ENCODE measurements at regions of chr19 and their contacts with region 1.

Region 1: DNA sequence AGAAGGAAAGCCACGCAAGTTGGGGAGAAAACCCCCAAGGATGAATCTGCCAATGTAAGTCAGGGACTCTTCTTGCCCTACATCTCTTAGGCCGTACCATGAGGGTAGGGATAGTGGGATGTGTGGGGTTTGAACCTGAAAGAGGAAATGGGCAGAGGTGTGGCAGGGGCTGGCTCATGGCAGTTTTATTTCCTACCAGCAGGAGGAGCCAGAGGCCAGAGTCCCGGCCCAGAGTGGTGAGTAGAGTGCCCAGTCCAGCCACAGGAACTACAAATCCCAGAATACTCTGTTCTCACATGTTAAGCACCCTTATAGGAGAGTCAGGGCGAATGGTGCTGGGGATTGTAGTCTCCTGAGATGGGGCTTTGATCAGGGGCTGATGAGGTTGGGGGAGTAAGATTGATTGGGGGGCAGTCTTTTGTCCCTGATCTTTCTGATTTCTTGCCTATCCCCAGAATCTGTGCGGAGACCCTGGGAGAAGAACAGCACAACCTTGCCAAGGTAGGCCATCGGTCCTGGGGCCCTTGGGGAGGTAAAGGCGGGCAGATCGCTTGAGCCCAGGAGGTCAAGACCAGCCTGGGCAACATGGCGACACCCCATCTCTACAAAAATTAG is 16.5 kb downstream of the VASP start:
- DNase-seq: peak; percentile 77 to 83
- ATAC-seq: peak; percentile 98
- H3K4me3 ChIP-seq: no peak overlapping the region
- H3K27ac ChIP-seq: peak overlapping the region; percentile 2 to 63 (median 32)
- H3K4me1 ChIP-seq: peaks cover 0 to 11% of the 10 kb centered on the region in 2 donors
- H3K27me3 ChIP-seq: peaks cover 0 to 2% (median 1%) of the 10 kb centered on the region in 3 donors
- CTCF ChIP-seq: peak; percentile 95 to 98 (median 97)
- POLR2A ChIP-seq: no peak

Region 2: DNA sequence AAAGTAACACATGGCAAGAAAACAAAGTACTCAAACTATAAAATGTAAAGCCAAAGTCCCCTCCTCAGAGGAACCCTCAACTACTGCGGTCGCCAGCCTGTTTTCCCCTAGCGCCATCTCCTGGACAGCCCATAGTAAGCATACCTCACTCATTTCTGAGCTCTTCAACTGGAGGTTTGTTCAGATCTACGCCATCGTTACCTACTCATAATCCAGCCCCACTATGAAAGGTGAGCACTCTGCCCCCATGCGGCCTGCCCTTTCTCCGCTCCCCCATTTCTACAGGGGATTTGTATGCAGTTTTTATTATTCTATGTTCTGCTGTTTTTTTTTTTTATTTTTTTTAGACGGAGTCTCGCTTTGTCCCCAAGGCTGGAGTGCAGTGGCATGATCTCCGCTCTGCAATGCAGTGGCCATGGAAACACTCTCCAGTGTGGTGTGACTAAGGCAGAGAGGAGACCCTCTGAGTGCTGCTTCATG is 34.7 kb after region 1 on chr19:
- in situ Hi-C with region 1: no loop called
- intact Hi-C with region 1: loop called (anchors 1 kb)
- DNase-seq: no peak
- ATAC-seq: peak; percentile 54 to 56
- H3K4me3 ChIP-seq: no peak overlapping the region
- H3K27ac ChIP-seq: no peak overlapping the region
- H3K4me1 ChIP-seq: peaks cover 0 to 12% of the 10 kb centered on the region in 2 donors
- H3K27me3 ChIP-seq: no peaks in the 10 kb centered on the region
- CTCF ChIP-seq: peak; percentile 17 to 53 (median 37)
- POLR2A ChIP-seq: no peak

Region 3: DNA sequence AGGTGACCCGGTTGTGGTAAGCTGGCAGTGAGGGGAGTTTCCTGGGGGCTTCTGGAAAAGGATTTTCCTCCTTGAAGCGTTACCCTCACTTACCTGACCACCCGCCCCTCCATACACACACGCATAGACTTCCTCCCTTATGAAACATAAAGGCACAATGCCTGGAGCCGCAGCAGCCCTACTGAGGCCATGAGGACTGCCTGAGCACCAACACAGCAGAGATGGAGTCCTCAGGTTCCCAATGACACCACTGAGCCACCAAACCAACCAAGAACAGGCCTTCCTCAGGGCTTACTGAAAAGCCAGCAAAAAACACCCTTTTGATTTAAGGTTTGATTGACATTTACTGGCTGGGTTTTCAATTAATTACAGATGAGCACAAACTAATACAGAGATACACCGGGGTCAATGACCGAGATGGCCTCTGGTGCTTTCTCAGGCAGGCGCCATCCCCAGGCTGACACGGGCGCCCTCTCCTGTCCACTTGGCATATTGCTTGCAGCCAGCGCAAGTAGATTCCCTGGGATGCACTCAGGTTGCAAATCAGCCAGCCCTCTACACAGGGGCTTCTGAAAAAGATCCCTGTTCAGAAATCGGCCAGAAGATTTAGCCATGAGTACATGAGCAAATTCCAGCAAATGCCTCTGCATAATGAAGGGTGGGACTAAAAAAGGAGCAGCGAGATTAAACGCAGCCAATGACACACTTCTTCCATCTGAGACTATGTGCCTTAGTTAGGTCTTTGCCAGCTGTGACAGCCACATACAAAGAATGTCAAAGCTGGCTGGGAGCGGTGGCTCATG is 46.1 kb after region 1 on chr19:
- in situ Hi-C with region 1: no loop called
- intact Hi-C with region 1: loop called (anchors 1 kb)
- DNase-seq: peak; percentile 48 to 77
- ATAC-seq: peak; percentile 60 to 61
- H3K4me3 ChIP-seq: no peak overlapping the region
- H3K27ac ChIP-seq: peak overlapping the region; percentile 84 to 93 (median 86)
- H3K4me1 ChIP-seq: peaks cover 37 to 43% of the 10 kb centered on the region in 2 donors
- H3K27me3 ChIP-seq: no peaks in the 10 kb centered on the region
- CTCF ChIP-seq: peak; percentile 73 to 87 (median 79)
- POLR2A ChIP-seq: no peak

Region 4: GRCh38 chr19:45643024-45643926 is 119.5 kb after region 1 on chr19:
- in situ Hi-C with region 1: loop called in 2 of 4 experiments (anchors 5 to 10 kb)
- intact Hi-C with region 1: loop called (anchors 1 kb)
- DNase-seq: peak; percentile 27 to 62
- ATAC-seq: peak; percentile 43 to 58
- H3K4me3 ChIP-seq: peak overlapping the region in 1 of 4 donors; percentile 8
- H3K27ac ChIP-seq: no peak overlapping the region
- H3K4me1 ChIP-seq: peaks cover 11 to 27% of the 10 kb centered on the region in 2 donors
- H3K27me3 ChIP-seq: peaks cover 0 to 30% (median 30%) of the 10 kb centered on the region in 3 donors
- CTCF ChIP-seq: peak; percentile 96 to 99 (median 97)
- POLR2A ChIP-seq: no peak

Region 5: DNA sequence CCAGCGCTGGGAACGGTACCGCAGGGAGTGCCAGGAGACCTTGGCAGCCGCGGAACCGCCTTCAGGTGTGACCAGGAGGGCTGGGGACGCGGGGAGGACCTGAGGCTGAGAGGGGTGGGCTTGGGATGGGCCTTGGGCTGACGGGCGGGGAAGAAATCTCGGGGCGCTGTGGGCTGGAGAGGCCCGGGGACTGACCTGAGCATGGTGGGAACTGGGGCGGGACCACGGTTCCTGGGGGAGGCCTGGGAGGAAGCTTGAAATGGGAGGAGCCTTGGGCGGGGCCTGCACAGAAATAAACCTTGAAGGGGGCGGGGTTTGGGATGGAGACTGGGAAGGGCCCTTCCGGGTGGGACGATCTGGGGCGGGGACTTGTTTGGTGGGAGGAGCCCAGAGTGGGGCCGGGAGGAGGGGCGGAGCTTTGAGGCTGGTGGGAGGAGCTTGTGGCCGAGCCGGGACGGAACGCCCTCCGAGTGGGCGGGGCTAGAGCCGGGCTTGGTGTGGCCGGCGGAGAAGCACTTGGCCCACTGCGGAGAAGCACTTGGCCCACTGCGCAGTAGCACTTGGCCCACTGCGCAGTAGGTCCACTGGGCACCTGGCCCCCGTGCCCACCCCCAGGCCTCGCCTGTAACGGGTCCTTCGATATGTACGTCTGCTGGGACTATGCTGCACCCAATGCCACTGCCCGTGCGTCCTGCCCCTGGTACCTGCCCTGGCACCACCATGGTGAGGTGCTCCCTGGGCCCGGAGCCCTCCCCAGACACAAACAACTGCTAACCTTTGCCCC is 147.1 kb after region 1 on chr19:
- in situ Hi-C with region 1: loop called in 1 of 4 experiments (anchors 25 kb)
- intact Hi-C with region 1: no loop called
- DNase-seq: peak in 1 of 2 donors; percentile 37
- ATAC-seq: peak in 1 of 2 donors; percentile 53
- H3K4me3 ChIP-seq: peak overlapping the region in 2 of 4 donors; percentile 10
- H3K27ac ChIP-seq: no peak overlapping the region
- H3K4me1 ChIP-seq: peaks cover 6 to 15% of the 10 kb centered on the region in 2 donors
- H3K27me3 ChIP-seq: peaks cover 64 to 78% (median 68%) of the 10 kb centered on the region in 3 donors
- CTCF ChIP-seq: no peak
- POLR2A ChIP-seq: no peak

Region 6: GRCh38 chr19:45681391-45682015 is 157.8 kb after region 1 on chr19:
- in situ Hi-C with region 1: no loop called
- intact Hi-C with region 1: loop called (anchors 2 kb)
- DNase-seq: peak; percentile 57 to 87
- ATAC-seq: peak; percentile 97 to 99
- H3K4me3 ChIP-seq: peak overlapping the region; percentile 50 to 62 (median 54)
- H3K27ac ChIP-seq: peak overlapping the region; percentile 65 to 82 (median 74)
- H3K4me1 ChIP-seq: peaks cover 4 to 16% of the 10 kb centered on the region in 2 donors
- H3K27me3 ChIP-seq: peaks cover 25 to 29% (median 27%) of the 10 kb centered on the region in 3 donors
- CTCF ChIP-seq: peak; percentile 94 to 99 (median 96)
- POLR2A ChIP-seq: no peak